ENCODE measurements at regions of chr22 and their contacts with region 1.

Region 1: GRCh38 chr22:17087498-17088131 is 2.8 kb downstream of the IL17RA start:
- DNase-seq: peak; percentile 62
- ATAC-seq: peak; percentile 6
- H3K4me3 Mint-ChIP-seq: peak overlapping the region; percentile 89
- H3K27ac Mint-ChIP-seq: peak overlapping the region; percentile 87
- H3K4me1 Mint-ChIP-seq: peaks cover 56% of the 10 kb centered on the region
- H3K27me3 Mint-ChIP-seq: no peaks in the 10 kb centered on the region

Region 2: DNA sequence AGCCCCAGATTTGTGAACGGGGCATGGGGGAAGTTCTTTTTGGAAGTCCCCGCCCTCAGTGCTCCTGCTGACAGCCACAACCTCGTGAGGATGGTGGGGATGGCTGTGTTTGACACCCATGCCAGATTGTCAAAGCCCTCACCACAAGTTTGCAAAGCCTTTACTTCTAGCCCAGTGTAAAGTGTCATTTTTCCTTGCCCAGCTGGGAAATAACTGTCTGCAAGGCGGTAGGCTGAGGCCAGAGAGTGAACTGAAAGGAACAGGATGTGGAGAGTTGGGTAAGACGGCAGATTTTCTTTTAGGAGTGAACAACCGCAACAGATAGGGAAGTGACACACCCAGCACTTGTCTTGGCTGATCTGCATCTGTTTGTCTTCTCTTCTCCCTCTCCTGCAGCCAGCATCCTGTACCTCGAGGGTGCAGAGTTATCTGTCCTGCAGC is 10.8 kb after region 1 on chr22:
- POLR2A ChIA-PET with region 1: interaction called, 11 read pairs
- DNase-seq: no peak
- ATAC-seq: peak; percentile 87
- H3K4me3 Mint-ChIP-seq: peak overlapping the region; percentile 56
- H3K27ac Mint-ChIP-seq: peak overlapping the region; percentile 80
- H3K4me1 Mint-ChIP-seq: peaks cover 58% of the 10 kb centered on the region
- H3K27me3 Mint-ChIP-seq: no peaks in the 10 kb centered on the region

Region 3: DNA sequence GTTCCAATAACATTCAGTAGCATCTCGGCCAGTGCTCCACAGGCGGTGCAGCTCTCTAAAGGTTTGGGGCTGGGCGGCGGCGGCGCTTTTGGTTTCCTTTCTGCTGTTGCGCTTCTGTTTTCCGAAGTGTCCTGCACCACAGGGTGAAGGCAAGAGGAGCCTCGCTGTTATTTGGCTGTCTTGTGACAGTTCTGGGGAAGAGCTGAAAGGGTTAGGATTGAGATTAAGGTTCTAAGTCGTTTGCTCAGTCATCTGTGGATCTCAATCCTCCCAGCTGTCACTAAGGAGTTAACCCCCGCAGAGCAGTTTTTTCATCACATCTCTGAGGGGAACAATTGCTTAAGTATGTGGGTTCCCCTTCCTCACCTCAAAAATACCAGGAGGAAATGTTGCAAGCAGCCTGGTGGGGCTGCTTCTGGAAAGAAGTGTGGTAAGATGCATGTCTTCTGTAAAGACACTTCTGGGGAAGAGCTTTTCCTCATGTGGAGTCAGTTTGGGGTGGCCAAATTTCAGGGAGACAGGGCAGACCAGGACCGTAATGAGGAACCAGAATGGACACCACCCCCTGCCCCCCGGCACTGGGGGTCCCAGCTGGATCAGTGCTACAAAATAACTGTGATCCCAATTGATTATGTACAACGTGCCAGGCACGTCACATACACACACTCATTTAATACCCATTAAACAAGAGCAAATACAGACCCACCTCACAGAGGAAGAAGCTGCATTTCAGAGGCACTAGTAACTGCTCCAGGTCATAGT is 19.4 kb after region 1 on chr22:
- POLR2A ChIA-PET with region 1: interaction called, 18 read pairs
- DNase-seq: peak; percentile 63
- ATAC-seq: peak; percentile 93
- H3K4me3 Mint-ChIP-seq: peak overlapping the region; percentile 78
- H3K27ac Mint-ChIP-seq: peak overlapping the region; percentile 91
- H3K4me1 Mint-ChIP-seq: peaks cover 23% of the 10 kb centered on the region
- H3K27me3 Mint-ChIP-seq: no peaks in the 10 kb centered on the region